ENCODE measurements at regions of chr4 and their contacts with region 1.

Region 1: DNA sequence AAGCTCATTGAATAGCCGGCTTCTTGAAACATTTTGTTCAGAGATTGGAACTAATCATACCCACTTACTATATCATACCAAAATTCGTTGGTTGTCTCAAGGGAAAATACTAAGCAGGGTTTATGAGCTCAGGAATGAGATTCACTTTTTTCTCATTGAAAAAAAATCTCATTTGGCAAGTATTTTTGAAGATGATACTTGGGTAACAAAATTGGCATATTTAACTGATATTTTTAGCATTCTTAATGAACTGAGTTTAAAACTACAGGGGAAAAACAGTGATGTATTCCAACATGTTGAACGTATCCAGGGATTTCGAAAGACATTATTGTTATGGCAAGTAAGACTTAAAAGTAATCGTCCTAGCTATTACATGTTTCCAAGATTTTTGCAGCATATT is 6.4 kb downstream of the FAM200B start:
- DNase-seq: no peak
- ATAC-seq: no peak
- H3K4me3 ChIP-seq: no peak overlapping the region
- H3K4me3 Mint-ChIP-seq: no peak overlapping the region
- H3K27ac ChIP-seq: no peak overlapping the region
- H3K27ac Mint-ChIP-seq: no peak overlapping the region
- H3K4me1 ChIP-seq: peaks cover 2 to 11% of the 10 kb centered on the region in 2 experiments
- H3K4me1 Mint-ChIP-seq: peaks cover 20 to 30% (median 23%) of the 10 kb centered on the region in 3 donors
- H3K27me3 ChIP-seq: no peaks in the 10 kb centered on the region
- H3K27me3 Mint-ChIP-seq: no peaks in the 10 kb centered on the region

Region 2: DNA sequence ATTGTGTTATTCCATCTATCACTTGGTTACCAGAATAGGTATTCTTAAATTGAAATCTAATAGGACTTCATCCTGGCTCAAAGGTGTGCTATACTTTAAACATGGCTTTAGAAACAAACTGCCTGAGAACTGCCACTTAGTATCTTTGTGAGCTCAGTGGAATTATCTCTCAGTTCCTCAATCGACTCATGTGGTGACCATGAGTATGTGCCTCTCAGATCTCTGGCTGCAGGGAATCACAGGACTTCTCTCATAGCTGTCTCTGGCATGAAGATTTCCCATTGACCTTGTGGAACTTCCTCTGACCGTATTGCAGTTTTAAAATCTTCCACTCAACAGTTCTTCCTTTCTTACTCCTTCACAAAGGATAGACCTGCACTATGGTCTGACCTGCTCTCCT is 1378.6 kb before region 1 on chr4:
- CTCF ChIA-PET with region 1: no interaction called
- POLR2A ChIA-PET with region 1: interaction called in 1 of 2 experiments, 18 read pairs
- DNase-seq: no peak
- ATAC-seq: no peak
- H3K4me3 ChIP-seq: no peak overlapping the region
- H3K4me3 Mint-ChIP-seq: no peak overlapping the region
- H3K27ac ChIP-seq: no peak overlapping the region
- H3K27ac Mint-ChIP-seq: no peak overlapping the region
- H3K4me1 ChIP-seq: no peaks in the 10 kb centered on the region
- H3K4me1 Mint-ChIP-seq: no peaks in the 10 kb centered on the region
- H3K27me3 ChIP-seq: no peaks in the 10 kb centered on the region
- H3K27me3 Mint-ChIP-seq: no peaks in the 10 kb centered on the region

Region 3: GRCh38 chr4:15676039-15676438 is 12.0 kb before region 1 on chr4:
- CTCF ChIA-PET with region 1: no interaction called
- POLR2A ChIA-PET with region 1: interaction called in 1 of 2 experiments, 12 read pairs
- DNase-seq: no peak
- ATAC-seq: no peak
- H3K4me3 ChIP-seq: no peak overlapping the region
- H3K4me3 Mint-ChIP-seq: no peak overlapping the region
- H3K27ac ChIP-seq: no peak overlapping the region
- H3K27ac Mint-ChIP-seq: no peak overlapping the region
- H3K4me1 ChIP-seq: peaks cover 0 to under 1% of the 10 kb centered on the region in 2 experiments
- H3K4me1 Mint-ChIP-seq: peaks cover under 1 to 3% (median 2%) of the 10 kb centered on the region in 3 donors
- H3K27me3 ChIP-seq: no peaks in the 10 kb centered on the region
- H3K27me3 Mint-ChIP-seq: no peaks in the 10 kb centered on the region